Naive thymus-derived CD4-positive, alpha-beta T cell (primary cell): ENCODE measurements at regions of chr12 and their contacts with region 1.

Region 1: GRCh38 chr12:92136965-92137721 is 8.5 kb downstream of the BTG1 start:
- DNase-seq: peak in 2 of 9 donors; percentile 34 to 40
- ATAC-seq: peak; percentile 12
- H3K4me3 ChIP-seq: peak overlapping the region; percentile 98
- H3K4me3 Mint-ChIP-seq: peak overlapping the region; percentile 94 to 100 (median 98)
- H3K27ac ChIP-seq: peak overlapping the region; percentile 91
- H3K27ac Mint-ChIP-seq: peak overlapping the region; percentile 91 to 100 (median 98)
- H3K4me1 ChIP-seq: peaks cover 34 to 39% of the 10 kb centered on the region in 2 donors
- H3K4me1 Mint-ChIP-seq: peaks cover 46 to 74% (median 51%) of the 10 kb centered on the region in 7 donors
- H3K27me3 ChIP-seq: no peaks in the 10 kb centered on the region
- H3K27me3 Mint-ChIP-seq: no peaks in the 10 kb centered on the region

Region 2: DNA sequence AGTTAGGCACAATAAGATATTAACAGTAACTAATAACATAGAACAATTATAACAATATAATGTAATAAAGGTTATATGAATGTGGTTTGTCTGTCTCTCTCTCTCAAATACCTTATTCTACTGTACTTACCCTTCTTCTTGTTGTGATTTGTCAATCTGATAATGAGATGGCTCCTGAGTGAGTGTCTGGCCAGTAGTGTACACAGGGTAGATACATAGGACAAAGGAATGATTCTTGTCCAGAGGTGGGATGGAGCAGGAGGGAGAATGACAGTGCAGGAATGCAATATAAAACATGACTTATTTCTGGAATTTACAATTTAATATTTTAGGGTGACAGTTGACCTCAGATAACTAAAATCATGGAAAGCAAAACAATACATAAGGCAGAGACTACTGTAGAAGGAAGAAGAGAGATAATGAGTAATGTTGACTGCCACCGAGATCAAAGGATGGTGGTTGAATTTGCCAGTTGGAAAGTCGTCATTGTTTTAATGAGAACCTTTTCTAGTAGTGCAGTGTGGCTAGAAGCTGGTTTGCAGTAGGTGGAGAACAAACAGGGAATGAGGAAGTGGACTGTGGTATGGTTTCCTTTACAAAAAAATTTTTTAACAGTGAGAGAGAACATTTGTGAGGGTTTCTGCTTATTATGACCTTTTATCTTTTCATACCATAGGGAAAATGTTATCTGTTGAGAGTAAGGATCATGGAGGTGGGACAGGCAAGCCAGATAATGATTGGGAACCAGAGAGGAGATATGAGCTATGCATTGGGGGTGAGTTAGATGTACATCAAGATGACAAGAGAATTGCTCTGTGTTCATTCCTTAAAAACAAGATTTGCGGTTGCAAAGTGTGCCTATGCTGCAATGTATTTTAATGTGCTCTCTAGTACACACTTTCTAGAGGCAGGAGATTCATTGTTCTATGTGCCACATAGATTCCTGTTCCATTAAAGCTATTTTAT is 449.8 kb before region 1 on chr12:
- CTCF ChIA-PET with region 1: no interaction called
- POLR2A ChIA-PET with region 1: no interaction called
- intact Hi-C with region 1: loop called (anchors 5 kb)
- DNase-seq: peak in 8 of 9 donors; percentile 25 to 83 (median 76)
- ATAC-seq: peak; percentile 92
- H3K4me3 ChIP-seq: no peak overlapping the region
- H3K4me3 Mint-ChIP-seq: peak overlapping the region in 9 of 10 donors; percentile 4 to 52 (median 38)
- H3K27ac ChIP-seq: no peak overlapping the region
- H3K27ac Mint-ChIP-seq: peak overlapping the region; percentile 6 to 84 (median 53)
- H3K4me1 ChIP-seq: peaks cover 0 to 17% of the 10 kb centered on the region in 2 donors
- H3K4me1 Mint-ChIP-seq: peaks cover 10 to 32% (median 25%) of the 10 kb centered on the region in 7 donors
- H3K27me3 ChIP-seq: no peaks in the 10 kb centered on the region
- H3K27me3 Mint-ChIP-seq: no peaks in the 10 kb centered on the region

Region 3: DNA sequence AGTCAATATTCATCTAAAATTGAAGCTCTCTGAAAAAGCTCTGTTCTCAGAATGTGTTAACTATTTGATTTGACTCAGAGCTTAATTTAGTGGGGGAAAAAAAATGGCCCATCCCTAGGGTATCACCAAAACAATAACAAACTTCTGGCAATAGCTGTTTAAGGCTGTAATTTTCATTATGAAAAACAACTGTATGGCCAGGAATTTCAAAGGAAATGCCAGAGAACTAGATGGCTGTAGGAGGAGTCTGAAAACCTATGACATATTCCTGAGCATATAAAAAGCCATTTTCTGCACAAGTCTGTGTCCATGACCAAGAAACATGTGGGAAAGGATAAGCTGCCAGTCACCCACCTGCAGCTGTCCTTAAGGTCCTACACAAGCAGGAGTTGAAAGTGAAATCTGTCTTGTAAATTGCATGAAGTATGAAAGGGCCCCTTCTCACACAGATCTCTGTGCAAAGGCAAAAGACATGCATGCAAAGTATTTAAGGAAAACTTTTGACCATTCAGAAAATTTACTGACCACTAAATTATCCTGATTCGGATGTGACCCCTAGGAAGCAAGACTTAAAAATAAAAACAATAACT is 290.6 kb before region 1 on chr12:
- CTCF ChIA-PET with region 1: no interaction called
- POLR2A ChIA-PET with region 1: no interaction called
- intact Hi-C with region 1: no loop called
- DNase-seq: no peak
- ATAC-seq: no peak
- H3K4me3 ChIP-seq: no peak overlapping the region
- H3K4me3 Mint-ChIP-seq: peak overlapping the region in 1 of 10 donors; percentile 29
- H3K27ac ChIP-seq: no peak overlapping the region
- H3K27ac Mint-ChIP-seq: peak overlapping the region in 1 of 9 donors; percentile 82
- H3K4me1 ChIP-seq: peaks cover 0 to 4% of the 10 kb centered on the region in 2 donors
- H3K4me1 Mint-ChIP-seq: peaks cover 2 to 24% (median 19%) of the 10 kb centered on the region in 7 donors
- H3K27me3 ChIP-seq: no peaks in the 10 kb centered on the region
- H3K27me3 Mint-ChIP-seq: peaks cover 0 to 4% (median 0%) of the 10 kb centered on the region in 5 donors

Region 4: GRCh38 chr12:92010853-92011701 is 126.1 kb before region 1 on chr12:
- CTCF ChIA-PET with region 1: no interaction called
- POLR2A ChIA-PET with region 1: interaction called, 15 read pairs
- intact Hi-C with region 1: loop called in 1 of 2 experiments (anchors 5 kb)
- DNase-seq: peak in 4 of 9 donors; percentile 21 to 37 (median 32)
- ATAC-seq: peak; percentile 37
- H3K4me3 ChIP-seq: peak overlapping the region; percentile 22
- H3K4me3 Mint-ChIP-seq: peak overlapping the region; percentile 32 to 90 (median 84)
- H3K27ac ChIP-seq: peak overlapping the region; percentile 69
- H3K27ac Mint-ChIP-seq: peak overlapping the region; percentile 63 to 98 (median 95)
- H3K4me1 ChIP-seq: peaks cover 11 to 36% of the 10 kb centered on the region in 2 donors
- H3K4me1 Mint-ChIP-seq: peaks cover 19 to 79% (median 69%) of the 10 kb centered on the region in 7 donors
- H3K27me3 ChIP-seq: no peaks in the 10 kb centered on the region
- H3K27me3 Mint-ChIP-seq: no peaks in the 10 kb centered on the region

Region 5: GRCh38 chr12:92049403-92049802 is 87.7 kb before region 1 on chr12:
- CTCF ChIA-PET with region 1: interaction called, 3 read pairs
- POLR2A ChIA-PET with region 1: interaction called, 377 read pairs
- intact Hi-C with region 1: no loop called
- DNase-seq: no peak
- ATAC-seq: no peak
- H3K4me3 ChIP-seq: no peak overlapping the region
- H3K4me3 Mint-ChIP-seq: peak overlapping the region in 1 of 10 donors; percentile 34
- H3K27ac ChIP-seq: no peak overlapping the region
- H3K27ac Mint-ChIP-seq: peak overlapping the region in 4 of 9 donors; percentile 14 to 99 (median 74)
- H3K4me1 ChIP-seq: peaks cover 0 to 34% of the 10 kb centered on the region in 2 donors
- H3K4me1 Mint-ChIP-seq: peaks cover 26 to 89% (median 80%) of the 10 kb centered on the region in 7 donors
- H3K27me3 ChIP-seq: no peaks in the 10 kb centered on the region
- H3K27me3 Mint-ChIP-seq: no peaks in the 10 kb centered on the region

Region 6: GRCh38 chr12:92108651-92109050 is 28.5 kb before region 1 on chr12:
- CTCF ChIA-PET with region 1: interaction called, 6 read pairs
- POLR2A ChIA-PET with region 1: interaction called, 59 read pairs
- intact Hi-C with region 1: loop called in 1 of 2 experiments (anchors 5 kb)
- DNase-seq: no peak
- ATAC-seq: peak; percentile 24
- H3K4me3 ChIP-seq: peak overlapping the region; percentile 14
- H3K4me3 Mint-ChIP-seq: peak overlapping the region in 9 of 10 donors; percentile 20 to 91 (median 68)
- H3K27ac ChIP-seq: peak overlapping the region; percentile 51
- H3K27ac Mint-ChIP-seq: peak overlapping the region in 8 of 9 donors; percentile 73 to 92 (median 84)
- H3K4me1 ChIP-seq: peaks cover 10 to 73% of the 10 kb centered on the region in 2 donors
- H3K4me1 Mint-ChIP-seq: peaks cover 55 to 93% (median 83%) of the 10 kb centered on the region in 7 donors
- H3K27me3 ChIP-seq: no peaks in the 10 kb centered on the region
- H3K27me3 Mint-ChIP-seq: no peaks in the 10 kb centered on the region

Region 7: DNA sequence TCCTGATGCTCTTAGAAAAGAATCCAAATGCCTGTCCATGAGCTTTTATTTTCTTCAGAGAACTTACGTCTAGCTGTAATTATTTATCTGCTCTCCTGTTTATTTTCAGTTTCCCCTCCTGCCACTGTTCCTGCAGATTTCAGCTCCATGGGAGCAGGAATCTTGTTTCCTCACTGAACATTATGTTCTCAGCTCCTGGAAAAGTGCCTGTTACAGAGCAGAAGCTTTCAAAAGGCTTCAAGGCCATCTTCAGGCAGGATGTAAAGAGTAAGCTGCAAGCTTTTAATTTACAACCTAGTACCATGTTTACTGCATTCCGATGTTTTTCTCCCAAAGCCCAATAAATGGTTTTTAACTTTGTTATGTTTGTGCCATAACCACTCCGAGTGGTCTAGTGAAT is 106.9 kb after region 1 on chr12:
- CTCF ChIA-PET with region 1: no interaction called
- POLR2A ChIA-PET with region 1: no interaction called
- intact Hi-C with region 1: no loop called
- DNase-seq: no peak
- ATAC-seq: no peak
- H3K4me3 ChIP-seq: no peak overlapping the region
- H3K4me3 Mint-ChIP-seq: peak overlapping the region in 5 of 10 donors; percentile 5 to 71 (median 15)
- H3K27ac ChIP-seq: no peak overlapping the region
- H3K27ac Mint-ChIP-seq: peak overlapping the region in 7 of 9 donors; percentile 8 to 72 (median 44)
- H3K4me1 ChIP-seq: peaks cover 0 to 10% of the 10 kb centered on the region in 2 donors
- H3K4me1 Mint-ChIP-seq: peaks cover 2 to 32% (median 22%) of the 10 kb centered on the region in 7 donors
- H3K27me3 ChIP-seq: no peaks in the 10 kb centered on the region
- H3K27me3 Mint-ChIP-seq: no peaks in the 10 kb centered on the region

Region 8: GRCh38 chr12:92396647-92397252 is 259.6 kb after region 1 on chr12:
- CTCF ChIA-PET with region 1: no interaction called
- POLR2A ChIA-PET with region 1: interaction called, 211 read pairs
- intact Hi-C with region 1: no loop called
- DNase-seq: no peak
- ATAC-seq: no peak
- H3K4me3 ChIP-seq: no peak overlapping the region
- H3K4me3 Mint-ChIP-seq: peak overlapping the region in 8 of 10 donors; percentile 9 to 76 (median 62)
- H3K27ac ChIP-seq: peak overlapping the region; percentile 85
- H3K27ac Mint-ChIP-seq: peak overlapping the region; percentile 90 to 100 (median 98)
- H3K4me1 ChIP-seq: peaks cover 76 to 84% of the 10 kb centered on the region in 2 donors
- H3K4me1 Mint-ChIP-seq: peaks cover 56 to 100% (median 93%) of the 10 kb centered on the region in 7 donors
- H3K27me3 ChIP-seq: no peaks in the 10 kb centered on the region
- H3K27me3 Mint-ChIP-seq: no peaks in the 10 kb centered on the region